ENCODE measurements at regions of chr10 and their contacts with region 1.

Region 1: DNA sequence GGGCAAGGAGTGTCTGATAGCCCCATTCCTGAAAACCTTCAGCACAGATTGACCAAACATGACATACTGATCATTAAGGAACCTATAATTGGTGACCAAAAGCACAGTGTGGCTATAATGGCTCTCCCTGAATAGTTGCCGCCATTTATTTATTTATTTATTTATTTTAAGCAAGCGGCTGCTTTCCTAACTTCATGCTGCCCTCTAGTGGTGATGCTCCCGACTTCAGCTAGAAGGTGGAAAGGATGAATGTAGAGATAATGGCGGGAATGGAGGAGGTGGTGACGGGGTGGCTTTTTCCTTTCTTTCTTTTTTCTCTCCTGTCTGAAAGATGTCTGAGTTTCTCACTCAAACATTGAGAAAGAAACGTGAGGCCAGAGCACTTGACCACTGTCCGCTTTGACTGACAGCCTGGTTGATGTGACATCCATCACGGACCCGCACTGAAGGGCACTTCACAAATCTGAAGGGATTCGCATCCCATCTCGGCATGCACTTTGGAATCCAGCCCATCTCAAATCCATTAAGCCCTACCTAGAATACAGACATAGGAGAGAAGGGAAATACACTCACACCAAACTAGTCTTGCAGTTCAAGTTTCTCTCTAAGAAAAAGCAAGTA is 1090.1 kb downstream of the KCNMA1 start:
- DNase-seq: peak; percentile 83 to 84
- ATAC-seq: peak; percentile 72
- H3K4me3 ChIP-seq: no peak overlapping the region
- H3K27ac ChIP-seq: no peak overlapping the region
- H3K4me1 ChIP-seq: no peaks in the 10 kb centered on the region
- H3K27me3 ChIP-seq: no peaks in the 10 kb centered on the region

Region 2: GRCh38 chr10:76311752-76312636 is 235.5 kb before region 1 on chr10:
- intact Hi-C with region 1: loop called in 1 of 2 experiments (anchors 5 kb)
- DNase-seq: no peak
- ATAC-seq: peak; percentile 46
- H3K4me3 ChIP-seq: no peak overlapping the region
- H3K27ac ChIP-seq: peak overlapping the region; percentile 74 to 93
- H3K4me1 ChIP-seq: peaks cover 6 to 11% of the 10 kb centered on the region in 2 donors
- H3K27me3 ChIP-seq: no peaks in the 10 kb centered on the region

Region 3: DNA sequence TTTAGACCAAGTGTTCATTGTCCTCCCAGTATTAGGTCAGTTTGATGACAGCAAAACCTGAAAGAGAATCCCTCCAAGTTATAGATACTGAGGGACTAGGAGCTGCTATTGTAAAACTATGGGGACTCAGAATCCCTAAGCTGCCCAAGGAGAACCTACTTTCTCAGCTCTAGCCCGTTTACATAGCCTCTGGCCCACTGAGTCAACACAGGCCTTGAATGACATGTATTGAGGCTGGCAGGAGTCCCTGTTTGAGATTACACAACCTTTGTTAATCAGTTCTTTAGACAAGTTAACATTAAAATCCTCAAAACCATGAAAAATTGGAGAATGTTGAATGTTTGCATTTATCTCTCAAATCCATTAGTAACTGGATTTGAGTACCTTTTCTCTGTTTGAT is 11.1 kb after region 1 on chr10:
- intact Hi-C with region 1: no loop called
- DNase-seq: no peak
- ATAC-seq: no peak
- H3K4me3 ChIP-seq: no peak overlapping the region
- H3K27ac ChIP-seq: peak overlapping the region in 1 of 2 donors; percentile 68
- H3K4me1 ChIP-seq: peaks cover 0 to 7% of the 10 kb centered on the region in 2 donors
- H3K27me3 ChIP-seq: no peaks in the 10 kb centered on the region